ENCODE measurements at regions of chr1 and their contacts with region 1.

Region 1: DNA sequence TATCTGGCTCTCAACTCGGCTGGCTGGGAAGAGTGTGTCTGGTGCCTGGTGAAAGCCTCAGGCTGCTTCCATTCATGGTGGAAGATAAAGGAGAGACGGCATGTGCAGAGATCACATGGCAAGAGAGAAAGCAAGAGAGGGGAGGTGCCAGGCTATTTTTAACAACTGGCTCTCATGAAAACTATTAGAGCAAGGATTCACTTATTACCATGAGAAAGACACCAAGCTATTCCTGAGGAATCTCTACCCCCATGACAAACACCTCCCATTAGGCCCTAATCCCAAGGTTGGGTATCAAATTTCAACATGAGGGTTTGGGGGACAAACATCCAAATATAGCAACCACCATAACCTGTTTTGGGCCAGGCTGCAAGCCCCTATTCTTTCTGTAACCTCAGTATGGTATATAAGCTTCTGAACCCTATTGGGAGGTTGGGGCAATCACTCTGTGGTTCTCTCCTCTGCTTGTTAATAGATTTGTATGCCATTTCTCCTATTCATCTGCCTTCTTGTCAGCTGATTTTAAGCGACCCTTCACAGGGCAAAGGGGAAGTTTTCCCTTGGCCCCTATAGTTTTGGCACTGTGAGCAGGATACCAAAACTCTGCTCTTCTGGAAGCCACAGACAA is 179.0 kb upstream of the TNR start:
- DNase-seq: no peak
- H3K4me3 ChIP-seq: no peak overlapping the region
- H3K27ac ChIP-seq: no peak overlapping the region
- H3K4me1 ChIP-seq: no peaks in the 10 kb centered on the region
- H3K27me3 ChIP-seq: no peaks in the 10 kb centered on the region
- CTCF ChIP-seq: no peak
- POLR2A ChIP-seq: no peak

Region 2: DNA sequence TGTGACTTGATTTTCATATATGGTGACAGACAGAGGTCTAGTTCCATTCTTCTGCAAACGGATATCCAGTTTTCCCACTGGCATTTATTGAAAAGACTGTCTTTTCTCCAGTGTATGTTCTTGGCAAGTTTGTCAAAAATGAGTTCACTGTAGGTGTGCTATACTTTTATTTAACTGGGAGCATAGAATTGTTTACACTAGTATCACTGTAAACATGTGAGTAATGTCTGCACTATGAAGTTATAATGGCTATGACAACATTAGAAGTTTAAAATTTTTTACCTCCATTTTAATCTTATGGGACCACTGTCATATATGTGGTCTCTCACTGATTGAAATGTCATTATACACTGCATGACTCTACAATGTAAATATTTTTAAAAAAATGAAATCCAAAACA is 77.9 kb after region 1 on chr1:
- intact Hi-C with region 1: no loop called
- DNase-seq: no peak
- H3K4me3 ChIP-seq: no peak overlapping the region
- H3K27ac ChIP-seq: no peak overlapping the region
- H3K4me1 ChIP-seq: no peaks in the 10 kb centered on the region
- H3K27me3 ChIP-seq: no peaks in the 10 kb centered on the region
- CTCF ChIP-seq: no peak
- POLR2A ChIP-seq: no peak

Region 3: GRCh38 chr1:176656257-176656995 is 734.1 kb after region 1 on chr1:
- intact Hi-C with region 1: loop called (anchors 5 kb)
- DNase-seq: no peak
- H3K4me3 ChIP-seq: no peak overlapping the region
- H3K27ac ChIP-seq: no peak overlapping the region
- H3K4me1 ChIP-seq: no peaks in the 10 kb centered on the region
- H3K27me3 ChIP-seq: no peaks in the 10 kb centered on the region
- CTCF ChIP-seq: no peak
- POLR2A ChIP-seq: no peak

Measured in breast epithelium (tissue), 4 donors.